ENCODE measurements at regions of chr16 and their contacts with region 1.

Region 1: DNA sequence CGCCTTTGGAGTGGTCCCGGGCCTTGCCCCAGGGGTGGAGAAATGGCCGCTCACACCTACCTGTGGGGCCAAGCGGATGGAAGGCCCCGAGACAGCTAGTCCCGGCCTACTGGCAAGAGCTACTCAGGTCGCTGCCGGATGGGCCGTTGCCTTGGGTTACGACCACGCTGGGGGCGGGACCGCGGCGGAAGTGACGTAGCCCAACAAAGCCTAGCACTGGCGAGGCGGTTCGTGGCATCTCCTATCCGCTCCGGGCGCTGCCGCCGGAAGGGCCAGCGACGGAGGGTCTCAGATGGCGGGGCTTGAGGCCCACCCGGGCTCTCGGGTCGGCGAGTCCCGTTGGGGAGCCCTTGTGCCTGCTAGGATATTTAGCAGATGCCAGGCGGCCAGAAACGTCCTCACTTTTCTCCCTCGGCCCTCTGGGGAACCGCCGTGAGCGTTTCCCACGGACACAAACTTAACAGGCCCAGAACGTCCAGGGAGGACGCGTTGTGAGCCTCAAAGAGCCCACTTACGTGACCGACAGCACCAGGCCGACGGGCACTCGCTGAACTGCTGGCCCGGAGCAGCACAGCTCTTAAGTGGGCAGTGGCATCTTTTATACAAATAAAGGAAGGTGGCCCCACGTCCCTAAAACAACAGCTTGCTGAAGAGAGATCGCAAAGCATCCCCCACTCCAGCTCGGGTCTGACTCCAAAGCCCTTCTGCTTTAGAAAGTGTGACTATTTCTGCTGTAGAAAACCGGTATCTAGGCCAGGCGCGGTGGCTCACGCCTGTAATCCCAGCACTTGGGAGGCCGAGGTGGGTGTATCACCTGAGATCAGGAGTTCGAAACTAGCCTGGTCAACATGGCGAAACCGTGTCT is at the start of gene C16orf46:
- DNase-seq: peak; percentile 96
- H3K4me3 ChIP-seq: peak within 1 kb of the TSS; percentile 60 to 67
- H3K27ac ChIP-seq: peak within 1 kb of the TSS; percentile 93 to 94
- H3K4me1 ChIP-seq: no peaks in the 10 kb centered on the region
- H3K27me3 ChIP-seq: no peaks in the 10 kb centered on the region
- CTCF ChIP-seq: peak in 2 of 4 experiments; percentile 7 to 32
- POLR2A ChIP-seq: peak; percentile 92
- total RNA-seq, gene C16orf46: 3.9 to 15.7 TPM

Region 2: DNA sequence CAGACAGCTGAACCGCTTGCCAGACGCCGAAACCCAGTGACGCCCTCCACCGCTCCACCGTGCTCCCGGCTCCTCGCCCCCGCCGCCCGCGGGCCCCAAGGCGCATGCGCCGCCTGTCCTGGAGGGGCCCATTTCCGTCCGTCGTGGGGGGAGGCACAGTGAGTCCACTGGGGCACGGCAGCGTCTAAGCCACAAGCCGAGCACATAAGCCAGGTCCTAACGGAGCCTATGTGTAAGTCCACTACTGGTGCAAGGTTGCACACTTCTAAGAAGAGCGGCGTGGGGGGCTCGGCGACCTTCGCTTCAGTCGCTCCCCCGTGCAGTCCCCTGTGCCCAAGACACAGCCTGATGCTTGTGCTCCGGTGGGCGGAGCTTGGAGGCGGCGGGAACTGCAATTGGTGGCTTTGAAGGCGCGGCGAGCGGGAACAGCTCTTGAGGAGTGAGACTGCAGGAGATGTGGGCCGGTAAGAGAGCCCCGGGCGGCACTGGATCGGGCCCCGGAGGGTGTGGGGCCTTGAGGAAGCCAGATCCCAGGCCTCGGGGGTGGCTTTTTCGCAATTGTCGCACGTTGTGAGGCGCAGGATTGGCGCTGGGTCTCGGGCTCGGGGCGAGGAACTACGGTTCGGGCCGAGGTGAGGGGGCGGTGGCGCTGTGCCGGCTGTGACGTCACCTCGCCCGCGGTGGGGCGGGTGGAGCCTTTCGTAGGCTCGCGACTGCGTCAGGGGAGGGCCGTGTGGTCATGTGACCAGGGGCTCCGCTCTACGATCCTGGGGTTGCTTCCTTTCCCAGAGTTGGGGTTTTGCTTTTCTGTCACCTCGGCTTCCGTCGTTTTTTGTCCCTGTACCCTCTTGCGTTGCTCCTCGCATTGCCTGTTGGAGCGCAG is 70.3 kb before region 1 on chr16 and contains the starts of genes CENPN and CMC2:
- intact Hi-C with region 1: loop called (anchors 10 kb)
- DNase-seq: peak; percentile 99
- H3K4me3 ChIP-seq: peak within 1 kb of the TSS; percentile 86 to 99
- H3K27ac ChIP-seq: peak within 1 kb of the TSS; percentile 98 to 99
- H3K4me1 ChIP-seq: peaks cover 11% of the 10 kb centered on the region
- H3K27me3 ChIP-seq: no peaks in the 10 kb centered on the region
- CTCF ChIP-seq: peak in 2 of 4 experiments; percentile 24 to 26
- POLR2A ChIP-seq: peak; percentile 91
- total RNA-seq, gene CENPN: 40.6 to 103 TPM
- total RNA-seq, gene CMC2: 38.9 to 153 TPM

Region 3: GRCh38 chr16:81035398-81035974 is 41.8 kb before region 1 on chr16 and contains the start of gene ATMIN:
- intact Hi-C with region 1: loop called (anchors 2 kb)
- DNase-seq: peak; percentile 85
- H3K4me3 ChIP-seq: peak within 1 kb of the TSS; percentile 77
- H3K27ac ChIP-seq: peak within 1 kb of the TSS; percentile 53 to 73
- H3K4me1 ChIP-seq: peaks cover 5% of the 10 kb centered on the region
- H3K27me3 ChIP-seq: no peaks in the 10 kb centered on the region
- CTCF ChIP-seq: peak; percentile 99 to 100 (median 100)
- POLR2A ChIP-seq: no peak
- total RNA-seq, gene ATMIN: 47.1 to 62.4 TPM

Measured in prostate gland (tissue), 2 donors.